Activated CD8-positive, alpha-beta T cell treated with anti-CD3 and anti-CD28 coated beads, Interleukin-2, amount 10 ng/mL, durations not matched to agents 7 days and 5 days (primary cell): ENCODE measurements at regions of chr4 and their contacts with region 1.

Region 1: GRCh38 chr4:89254847-89255246 is 52.8 kb downstream of the GPRIN3 start:
- DNase-seq: peak; percentile 53
- ATAC-seq: peak; percentile 57
- H3K4me3 Mint-ChIP-seq: no peak overlapping the region
- H3K27ac Mint-ChIP-seq: peak overlapping the region; percentile 25
- H3K4me1 Mint-ChIP-seq: peaks cover 64% of the 10 kb centered on the region
- H3K27me3 Mint-ChIP-seq: no peaks in the 10 kb centered on the region

Region 2: DNA sequence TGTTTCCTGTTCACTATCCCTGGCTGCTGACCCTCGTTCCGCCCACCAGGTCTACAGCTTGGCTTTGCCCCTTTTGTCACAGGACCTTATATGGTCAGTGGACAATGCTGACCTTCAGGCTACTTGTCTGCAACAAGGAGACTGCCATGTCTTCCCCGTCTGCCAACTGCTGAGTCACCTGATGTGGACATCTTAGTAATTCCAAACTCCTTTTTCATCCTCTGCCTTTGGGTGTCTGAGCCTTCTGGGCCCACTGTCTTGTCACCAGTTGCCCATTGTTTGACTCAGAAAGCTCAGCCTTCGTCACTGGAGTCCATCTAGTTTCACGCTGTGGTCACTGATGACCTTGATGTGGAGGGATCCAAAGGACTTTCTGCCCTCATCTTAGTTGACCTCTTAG is 22.6 kb after region 1 on chr4:
- CTCF ChIA-PET with region 1: interaction called, 15 read pairs
- POLR2A ChIA-PET with region 1: interaction called, 5 read pairs
- DNase-seq: no peak
- ATAC-seq: no peak
- H3K4me3 Mint-ChIP-seq: no peak overlapping the region
- H3K27ac Mint-ChIP-seq: no peak overlapping the region
- H3K4me1 Mint-ChIP-seq: peaks cover 20% of the 10 kb centered on the region
- H3K27me3 Mint-ChIP-seq: no peaks in the 10 kb centered on the region

Region 3: DNA sequence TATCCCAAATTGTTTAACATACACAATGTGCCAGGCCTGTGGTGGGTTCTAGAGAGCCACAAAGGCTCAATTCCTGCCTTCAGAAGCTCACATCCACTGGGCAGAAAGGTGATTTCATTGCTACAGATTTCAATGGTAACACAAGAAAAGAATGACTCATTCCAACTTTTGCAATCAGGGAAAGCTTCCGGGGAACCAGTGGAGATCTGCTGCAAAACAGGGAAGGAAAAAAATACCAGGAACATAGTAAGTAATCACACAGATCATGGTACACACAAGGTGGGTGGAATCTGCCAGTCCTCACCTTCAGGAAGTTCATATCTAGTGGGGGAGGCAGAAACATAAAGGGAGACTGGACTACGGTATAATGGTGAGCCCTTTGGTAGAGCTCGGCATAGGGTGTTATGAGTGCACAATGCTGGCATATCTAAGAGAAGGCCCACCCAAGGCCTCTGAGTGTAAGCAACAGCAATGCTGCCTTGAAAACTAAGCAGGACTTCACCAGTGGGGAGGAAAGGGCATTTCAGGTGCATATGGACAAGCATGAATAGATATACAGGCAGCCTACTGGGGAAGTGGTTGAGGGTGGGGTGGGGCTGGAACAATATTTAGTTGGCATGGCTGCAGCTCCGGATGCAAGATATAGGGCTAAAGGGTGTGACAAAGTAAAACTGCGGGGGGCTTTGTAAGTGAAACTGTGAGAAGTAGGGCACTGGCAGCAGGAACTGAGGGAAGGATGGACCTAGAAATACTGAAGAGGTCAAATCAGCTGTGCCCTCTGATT is 28.6 kb after region 1 on chr4:
- CTCF ChIA-PET with region 1: interaction called, 15 read pairs
- POLR2A ChIA-PET with region 1: interaction called, 3 read pairs
- DNase-seq: peak; percentile 69
- ATAC-seq: peak; percentile 76
- H3K4me3 Mint-ChIP-seq: peak overlapping the region; percentile 50
- H3K27ac Mint-ChIP-seq: peak overlapping the region; percentile 78
- H3K4me1 Mint-ChIP-seq: peaks cover 59% of the 10 kb centered on the region
- H3K27me3 Mint-ChIP-seq: no peaks in the 10 kb centered on the region

Region 4: GRCh38 chr4:89434364-89434988 is 179.6 kb after region 1 on chr4:
- CTCF ChIA-PET with region 1: interaction called, 17 read pairs
- POLR2A ChIA-PET with region 1: no interaction called
- DNase-seq: no peak
- ATAC-seq: peak; percentile 70
- H3K4me3 Mint-ChIP-seq: no peak overlapping the region
- H3K27ac Mint-ChIP-seq: no peak overlapping the region
- H3K4me1 Mint-ChIP-seq: peaks cover 13% of the 10 kb centered on the region
- H3K27me3 Mint-ChIP-seq: peaks cover 2% of the 10 kb centered on the region